Spleen (tissue), 13 donors: ENCODE measurements at regions of chr1 and their contacts with region 1.

Region 1: DNA sequence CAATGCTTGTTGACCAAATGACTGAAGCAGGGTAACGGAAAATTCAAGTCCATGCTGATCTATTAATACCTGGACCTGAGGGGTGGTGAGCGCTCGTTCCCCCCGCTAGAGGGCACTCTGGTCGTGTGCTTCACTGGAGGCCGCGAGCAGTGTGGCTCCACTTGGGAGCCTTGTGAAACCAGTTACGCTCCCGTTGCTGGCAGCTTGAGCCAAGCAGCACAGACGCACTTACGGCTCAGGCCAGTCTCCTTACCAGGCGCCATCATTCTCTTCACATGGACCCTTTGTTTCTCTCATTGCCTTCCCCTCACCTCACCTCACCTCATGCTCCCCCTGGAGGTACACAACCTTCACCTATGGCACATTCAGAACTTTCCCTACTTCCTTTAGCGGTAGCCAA is 49.7 kb upstream of the TSPAN2 start:
- DNase-seq: peak; percentile 88
- H3K4me3 ChIP-seq: peak overlapping the region in 1 of 8 donors; percentile 46
- H3K27ac ChIP-seq: no peak overlapping the region
- H3K4me1 ChIP-seq: peaks cover 0 to 8% (median 5%) of the 10 kb centered on the region in 6 donors
- H3K27me3 ChIP-seq: peaks cover 0 to 24% (median 3%) of the 10 kb centered on the region in 7 donors
- CTCF ChIP-seq: peak; percentile 52 to 86 (median 77)
- POLR2A ChIP-seq: no peak

Region 2: DNA sequence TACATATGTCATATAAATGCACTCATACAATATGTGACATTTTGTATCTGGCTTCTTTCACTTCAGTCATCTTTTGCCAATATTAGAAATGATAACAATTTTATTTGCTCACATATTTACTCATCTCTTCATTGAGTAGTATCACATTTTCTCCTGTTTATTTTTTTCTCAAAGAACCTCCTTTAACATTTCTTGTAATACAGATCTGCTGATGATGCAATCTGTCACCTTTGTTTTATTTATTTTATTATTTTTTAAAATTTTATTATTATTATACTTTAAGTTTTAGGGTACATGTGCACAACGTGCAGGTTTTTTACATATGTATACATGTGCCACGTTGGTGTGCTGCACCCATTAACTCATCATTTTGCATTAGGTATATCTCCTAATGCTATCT is 125.2 kb before region 1 on chr1:
- intact Hi-C with region 1: no loop called
- DNase-seq: no peak
- H3K4me3 ChIP-seq: no peak overlapping the region
- H3K27ac ChIP-seq: no peak overlapping the region
- H3K4me1 ChIP-seq: no peaks in the 10 kb centered on the region
- H3K27me3 ChIP-seq: no peaks in the 10 kb centered on the region
- CTCF ChIP-seq: no peak
- POLR2A ChIP-seq: no peak

Region 3: DNA sequence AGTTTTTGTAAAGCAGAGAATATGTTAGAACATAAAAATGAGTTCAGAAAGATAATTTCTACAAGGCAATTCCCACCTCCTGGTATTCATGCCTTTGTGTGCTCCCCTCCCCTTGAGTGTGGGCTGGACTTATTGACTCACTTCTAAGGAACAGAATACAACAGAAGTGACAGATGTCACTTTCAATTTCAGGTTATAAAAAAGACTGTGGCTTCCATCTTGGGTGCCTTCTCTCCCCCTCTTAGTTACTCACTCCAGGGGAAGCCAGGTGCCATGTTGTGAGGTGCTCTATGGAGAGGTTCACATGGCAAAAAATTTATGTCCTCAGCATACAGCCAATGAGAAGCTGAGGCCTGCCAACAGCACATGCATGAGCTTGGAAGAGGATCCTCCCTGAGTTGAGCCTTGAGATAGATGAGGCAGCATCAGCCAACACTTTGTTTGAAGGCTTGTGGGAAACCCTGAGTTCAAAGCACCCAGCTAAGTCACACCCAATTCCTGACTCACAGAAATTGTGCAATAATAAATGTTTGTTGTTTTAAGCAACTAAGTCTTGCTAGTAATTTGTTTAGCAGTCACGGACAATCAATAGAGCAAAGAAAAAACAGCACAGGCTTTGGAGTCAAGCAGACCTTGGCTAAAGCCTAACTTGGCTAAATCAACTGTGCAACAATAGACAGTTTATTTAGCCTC is 272.5 kb after region 1 on chr1:
- intact Hi-C with region 1: no loop called
- DNase-seq: no peak
- H3K4me3 ChIP-seq: no peak overlapping the region
- H3K27ac ChIP-seq: no peak overlapping the region
- H3K4me1 ChIP-seq: no peaks in the 10 kb centered on the region
- H3K27me3 ChIP-seq: no peaks in the 10 kb centered on the region
- CTCF ChIP-seq: no peak
- POLR2A ChIP-seq: no peak

Region 4: DNA sequence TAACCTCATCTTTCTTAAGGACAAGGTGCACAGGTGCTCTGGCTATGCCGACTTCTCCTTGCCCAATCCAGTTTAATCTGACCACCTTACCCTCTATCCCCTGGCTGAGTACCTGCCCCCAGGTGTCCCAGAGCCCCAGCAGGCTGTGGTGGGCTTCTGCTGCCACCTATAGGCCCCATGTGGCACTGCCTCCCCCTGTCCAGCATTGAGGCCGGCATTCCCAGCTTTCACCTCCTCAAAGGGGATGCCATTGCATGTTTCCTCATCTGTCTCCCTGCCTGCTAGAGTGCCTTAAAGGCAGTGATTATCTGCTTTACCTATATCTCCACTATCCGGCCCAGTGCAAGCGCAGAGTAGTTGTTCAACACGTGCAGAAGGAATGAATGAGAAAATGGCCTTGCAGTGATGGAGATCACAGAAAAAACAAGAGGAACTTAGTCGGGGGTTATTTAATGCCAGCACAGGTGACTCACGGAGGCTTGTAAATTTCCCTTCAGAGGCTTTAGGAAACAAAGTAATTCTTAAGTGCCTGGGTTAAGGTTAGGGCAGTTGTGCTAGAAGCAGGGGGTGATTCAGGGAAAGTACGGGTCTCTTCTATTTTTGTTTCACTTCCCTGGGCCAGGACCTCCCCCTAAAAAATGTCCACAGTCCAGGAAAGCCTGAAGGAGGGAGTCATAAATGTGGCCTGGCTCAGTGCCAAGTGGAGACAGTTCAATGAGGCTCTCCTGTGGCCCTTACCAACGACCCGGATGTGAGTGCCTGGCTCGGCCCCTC is 330.9 kb after region 1 on chr1:
- intact Hi-C with region 1: loop called (anchors 5 kb)
- DNase-seq: no peak
- H3K4me3 ChIP-seq: no peak overlapping the region
- H3K27ac ChIP-seq: no peak overlapping the region
- H3K4me1 ChIP-seq: peaks cover 5 to 9% (median 7%) of the 10 kb centered on the region in 6 donors
- H3K27me3 ChIP-seq: no peaks in the 10 kb centered on the region
- CTCF ChIP-seq: peak; percentile 31 to 81 (median 62)
- POLR2A ChIP-seq: no peak

Region 5: DNA sequence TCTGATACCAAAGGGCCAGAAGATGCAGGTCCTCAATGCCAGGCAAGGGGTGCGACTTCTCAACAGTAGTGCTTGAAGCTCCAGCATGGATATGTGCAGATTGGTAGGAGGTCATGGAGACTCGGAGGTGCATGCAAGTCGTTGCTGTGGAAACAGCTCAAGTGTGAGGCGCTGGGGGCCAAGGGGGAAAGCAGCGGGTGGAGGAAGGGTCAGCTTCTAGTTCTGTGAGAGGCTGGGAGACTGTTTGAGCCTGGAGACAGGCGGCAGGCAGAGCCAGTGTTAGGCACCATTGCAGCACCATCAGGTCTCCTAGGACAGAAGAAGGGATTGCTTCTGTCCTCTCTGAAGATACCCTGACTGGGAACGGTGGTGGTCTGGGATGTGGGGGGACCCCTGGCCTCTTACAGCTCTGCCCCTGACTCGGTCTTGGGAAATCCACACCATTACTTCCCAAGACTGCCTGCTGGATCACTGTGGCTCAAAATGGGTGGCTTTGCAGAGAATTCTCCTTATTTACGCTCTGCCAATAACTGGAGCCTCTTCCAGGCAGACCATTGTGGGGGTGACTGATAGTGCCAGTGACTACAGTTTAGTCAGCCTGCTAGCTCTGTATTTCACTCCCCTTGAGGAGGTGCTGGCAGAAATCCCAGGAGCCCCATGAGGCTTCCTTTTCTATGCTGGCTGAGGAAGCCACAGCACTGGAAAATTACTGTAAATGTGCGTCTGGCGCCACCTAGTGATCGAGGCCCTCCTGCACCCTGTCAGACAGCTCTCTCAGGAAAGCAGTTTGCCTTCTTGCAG is 456.5 kb after region 1 on chr1:
- intact Hi-C with region 1: loop called (anchors 5 kb)
- DNase-seq: peak; percentile 78
- H3K4me3 ChIP-seq: no peak overlapping the region
- H3K27ac ChIP-seq: no peak overlapping the region
- H3K4me1 ChIP-seq: peaks cover 0 to 7% (median 0%) of the 10 kb centered on the region in 6 donors
- H3K27me3 ChIP-seq: peaks cover 0 to 4% (median 0%) of the 10 kb centered on the region in 7 donors
- CTCF ChIP-seq: peak; percentile 39 to 86 (median 72)
- POLR2A ChIP-seq: no peak